ENCODE measurements at regions of chr3 and their contacts with region 1.

Region 1: GRCh38 chr3:172287937-172288477 is 160.2 kb downstream of the GHSR start:
- DNase-seq: no peak
- H3K4me3 ChIP-seq: no peak overlapping the region
- H3K4me3 Mint-ChIP-seq: no peak overlapping the region
- H3K27ac Mint-ChIP-seq: no peak overlapping the region
- H3K4me1 ChIP-seq: no peaks in the 10 kb centered on the region
- H3K4me1 Mint-ChIP-seq: peaks cover 7% of the 10 kb centered on the region
- H3K27me3 ChIP-seq: no peaks in the 10 kb centered on the region
- H3K27me3 Mint-ChIP-seq: no peaks in the 10 kb centered on the region
- CTCF ChIP-seq: no peak

Region 2: GRCh38 chr3:172009803-172010202 is 278.2 kb before region 1 on chr3:
- CTCF ChIA-PET with region 1: interaction called, 11 read pairs
- POLR2A ChIA-PET with region 1: no interaction called
- intact Hi-C with region 1: no loop called
- DNase-seq: no peak
- H3K4me3 ChIP-seq: no peak overlapping the region
- H3K4me3 Mint-ChIP-seq: no peak overlapping the region
- H3K27ac Mint-ChIP-seq: no peak overlapping the region
- H3K4me1 ChIP-seq: peaks cover 12% of the 10 kb centered on the region; the same call in 1 of the 2 replicates
- H3K4me1 Mint-ChIP-seq: peaks cover 13% of the 10 kb centered on the region
- H3K27me3 ChIP-seq: no peaks in the 10 kb centered on the region
- H3K27me3 Mint-ChIP-seq: no peaks in the 10 kb centered on the region
- CTCF ChIP-seq: no peak

Region 3: GRCh38 chr3:172221547-172221946 is 66.5 kb before region 1 on chr3:
- CTCF ChIA-PET with region 1: no interaction called
- POLR2A ChIA-PET with region 1: no interaction called
- intact Hi-C with region 1: no loop called
- DNase-seq: no peak
- H3K4me3 ChIP-seq: no peak overlapping the region
- H3K4me3 Mint-ChIP-seq: no peak overlapping the region
- H3K27ac Mint-ChIP-seq: no peak overlapping the region
- H3K4me1 ChIP-seq: peaks cover 6% of the 10 kb centered on the region; the same call in 1 of the 2 replicates
- H3K4me1 Mint-ChIP-seq: peaks cover 19% of the 10 kb centered on the region
- H3K27me3 ChIP-seq: no peaks in the 10 kb centered on the region
- H3K27me3 Mint-ChIP-seq: no peaks in the 10 kb centered on the region
- CTCF ChIP-seq: no peak

Region 4: GRCh38 chr3:172323894-172324610 is 36.0 kb after region 1 on chr3:
- CTCF ChIA-PET with region 1: no interaction called
- POLR2A ChIA-PET with region 1: no interaction called
- intact Hi-C with region 1: no loop called
- DNase-seq: peak in 1 of 2 experiments; percentile 14
- H3K4me3 ChIP-seq: no peak overlapping the region
- H3K4me3 Mint-ChIP-seq: no peak overlapping the region
- H3K27ac Mint-ChIP-seq: no peak overlapping the region
- H3K4me1 ChIP-seq: no peaks in the 10 kb centered on the region
- H3K4me1 Mint-ChIP-seq: peaks cover 12% of the 10 kb centered on the region
- H3K27me3 ChIP-seq: no peaks in the 10 kb centered on the region
- H3K27me3 Mint-ChIP-seq: no peaks in the 10 kb centered on the region
- CTCF ChIP-seq: no peak